Activated CD4-positive, alpha-beta T cell treated with anti-CD3 and anti-CD28 coated beads for 36 hours (primary cell): ENCODE measurements at regions of chr3 and their contacts with region 1.

Region 1: GRCh38 chr3:27721717-27722542 is at the start of gene EOMES:
- DNase-seq: peak; percentile 82
- ATAC-seq: peak; percentile 74
- H3K4me3 Mint-ChIP-seq: peak within 1 kb of the TSS; percentile 72
- H3K27ac Mint-ChIP-seq: no peak within 1 kb of the TSS
- H3K4me1 Mint-ChIP-seq: peaks cover 22% of the 10 kb centered on the region
- H3K27me3 Mint-ChIP-seq: peaks cover 72% of the 10 kb centered on the region
- total RNA-seq, gene EOMES: 0.25 TPM

Region 2: GRCh38 chr3:27960133-27960532 is 238.2 kb after region 1 on chr3:
- CTCF ChIA-PET with region 1: no interaction called
- POLR2A ChIA-PET with region 1: no interaction called
- intact Hi-C with region 1: loop called in 1 of 2 experiments (anchors 5 kb)
- DNase-seq: no peak
- ATAC-seq: peak; percentile 69
- H3K4me3 Mint-ChIP-seq: no peak overlapping the region
- H3K27ac Mint-ChIP-seq: no peak overlapping the region
- H3K4me1 Mint-ChIP-seq: peaks cover 11% of the 10 kb centered on the region
- H3K27me3 Mint-ChIP-seq: no peaks in the 10 kb centered on the region

Region 3: DNA sequence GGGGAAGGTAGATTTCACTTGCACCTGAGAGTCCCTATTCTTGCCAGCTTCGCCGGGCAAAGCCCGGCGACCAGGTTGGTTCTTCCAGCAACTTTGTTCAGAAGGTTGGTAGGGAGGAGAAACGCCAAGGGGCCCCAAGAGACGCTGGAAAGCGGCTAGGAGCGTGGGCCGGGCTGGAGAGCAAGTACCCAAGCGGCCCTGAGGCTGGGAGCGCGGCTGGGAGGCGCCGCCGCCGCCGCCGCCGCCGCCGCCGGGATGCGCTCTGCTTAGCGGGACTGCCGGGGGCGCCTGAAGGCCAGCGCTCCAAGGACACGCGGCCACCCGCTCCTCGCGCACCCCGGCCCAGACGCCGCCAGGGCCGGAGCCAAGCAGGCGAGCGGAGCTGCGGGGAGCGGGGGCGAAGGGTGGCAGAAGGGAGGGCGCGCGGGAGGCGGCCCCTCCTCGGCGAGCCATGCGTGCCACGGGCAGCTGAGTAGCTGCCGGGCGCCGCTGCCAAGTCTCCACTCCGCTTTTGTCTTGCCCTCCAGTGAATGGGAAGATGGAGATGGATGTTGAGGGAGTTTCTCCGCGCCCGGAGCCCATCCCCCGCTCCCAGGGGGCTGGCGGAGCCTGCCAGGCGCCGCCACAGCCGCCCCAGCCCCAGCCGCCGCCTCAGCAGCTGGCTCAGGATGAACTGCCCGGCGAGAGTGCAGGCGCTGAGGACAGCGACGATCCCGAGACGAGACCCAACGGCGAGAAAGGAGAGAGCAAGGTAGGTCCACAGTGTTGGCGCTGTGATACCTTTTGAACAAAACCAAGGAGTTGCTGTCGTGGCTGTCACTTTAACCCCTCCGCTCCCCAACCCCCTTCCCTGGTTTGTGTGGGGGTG is 854.0 kb after region 1 on chr3:
- CTCF ChIA-PET with region 1: no interaction called
- POLR2A ChIA-PET with region 1: no interaction called
- intact Hi-C with region 1: loop called (anchors 10 kb)
- DNase-seq: peak; percentile 7
- ATAC-seq: no peak
- H3K4me3 Mint-ChIP-seq: no peak overlapping the region
- H3K27ac Mint-ChIP-seq: no peak overlapping the region
- H3K4me1 Mint-ChIP-seq: no peaks in the 10 kb centered on the region
- H3K27me3 Mint-ChIP-seq: peaks cover 53% of the 10 kb centered on the region